H1 (cell line): ENCODE measurements at regions of chr4 and their contacts with region 1.

Region 1: DNA sequence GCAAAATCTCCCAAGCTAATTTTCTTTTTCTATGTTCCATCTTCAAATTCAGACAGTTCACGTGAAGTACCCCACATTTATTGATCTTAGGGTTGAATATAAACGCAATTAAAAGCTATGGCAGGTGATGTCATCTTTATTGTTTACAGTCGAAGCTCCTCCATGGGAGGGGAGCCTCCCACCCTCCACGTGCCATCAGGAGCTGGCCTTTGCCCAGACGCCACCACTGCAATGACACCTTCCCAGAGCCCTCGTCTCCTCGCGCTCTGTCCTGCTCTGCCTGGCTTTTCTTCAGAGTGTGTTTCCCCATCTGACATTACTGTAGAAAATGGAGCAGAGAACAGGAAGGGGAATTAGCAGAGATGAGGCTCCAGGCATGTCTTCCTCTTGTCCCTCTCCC is 18.8 kb upstream of the CYP4V2 start:
- DNase-seq: no peak
- H3K4me3 ChIP-seq: no peak overlapping the region
- H3K27ac ChIP-seq: no peak overlapping the region
- H3K4me1 ChIP-seq: no peaks in the 10 kb centered on the region; a peak in 1 of 7 replicates
- H3K27me3 ChIP-seq: no peaks in the 10 kb centered on the region
- CTCF ChIP-seq: no peak
- EP300 ChIP-seq: no peak
- POLR2A ChIP-seq: no peak
- RAD21 ChIP-seq: no peak

Region 2: GRCh38 chr4:186149872-186150271 is 22.7 kb before region 1 on chr4:
- CTCF ChIA-PET with region 1: interaction called, 12 read pairs
- POLR2A ChIA-PET with region 1: interaction called, 3 read pairs
- DNase-seq: peak; percentile 49 to 87
- H3K4me3 ChIP-seq: peak overlapping the region in 1 of 4 experiments; percentile 32; a peak in 1 of 8 replicates
- H3K27ac ChIP-seq: no peak overlapping the region
- H3K4me1 ChIP-seq: peaks cover 1 to 12% (median 6%) of the 10 kb centered on the region in 4 experiments; a peak in 5 of 7 replicates
- H3K27me3 ChIP-seq: peaks cover 1 to 19% (median 14%) of the 10 kb centered on the region in 4 experiments
- CTCF ChIP-seq: peak; percentile 61 to 73 (median 62)
- EP300 ChIP-seq: no peak
- POLR2A ChIP-seq: no peak
- RAD21 ChIP-seq: peak; percentile 30 to 49; a peak in 2 of 4 replicates